Aorta (tissue), 5 donors: ENCODE measurements at regions of chr6 and their contacts with region 1.

Region 1: GRCh38 chr6:26473758-26474438 is 16.1 kb downstream of the BTN2A1 start:
- DNase-seq: peak; percentile 87 to 89
- ATAC-seq: peak; percentile 94
- H3K4me3 ChIP-seq: peak overlapping the region; percentile 28 to 87
- H3K27ac ChIP-seq: peak overlapping the region; percentile 75 to 87
- H3K4me1 ChIP-seq: no peaks in the 10 kb centered on the region
- H3K27me3 ChIP-seq: no peaks in the 10 kb centered on the region

Region 2: GRCh38 chr6:26401987-26402658 is 71.8 kb before region 1 on chr6 and contains the start of gene BTN3A1:
- intact Hi-C with region 1: loop called in 1 of 2 experiments (anchors 10 kb)
- DNase-seq: peak; percentile 73 to 90
- ATAC-seq: peak; percentile 94
- H3K4me3 ChIP-seq: peak within 1 kb of the TSS; percentile 70 to 88
- H3K27ac ChIP-seq: no peak within 1 kb of the TSS
- H3K4me1 ChIP-seq: peaks cover 0 to 3% of the 10 kb centered on the region in 2 donors
- H3K27me3 ChIP-seq: no peaks in the 10 kb centered on the region
- total RNA-seq, gene BTN3A1: 12.0 to 40.7 TPM

Region 3: DNA sequence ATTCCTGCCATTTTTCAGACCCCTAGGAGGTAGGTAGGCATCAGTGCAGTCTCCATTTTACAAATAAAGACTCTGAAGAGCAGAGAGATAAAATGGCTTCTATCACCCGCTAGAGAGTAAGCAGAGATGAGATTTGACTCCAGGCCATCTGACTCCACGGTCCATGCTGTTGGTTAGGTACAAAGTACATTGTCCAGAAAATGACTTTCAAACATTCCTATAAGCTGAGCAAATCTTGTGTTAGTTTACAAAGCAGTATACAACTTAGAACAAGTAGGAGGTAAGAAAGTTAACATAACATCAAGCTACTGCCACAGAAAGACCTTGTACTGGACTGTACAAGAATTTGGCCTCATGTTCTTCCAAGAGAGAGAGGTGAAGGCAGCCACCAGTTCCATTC is 41.1 kb after region 1 on chr6:
- intact Hi-C with region 1: loop called in 1 of 2 experiments (anchors 5 kb)
- DNase-seq: no peak
- ATAC-seq: no peak
- H3K4me3 ChIP-seq: no peak overlapping the region
- H3K27ac ChIP-seq: no peak overlapping the region
- H3K4me1 ChIP-seq: no peaks in the 10 kb centered on the region
- H3K27me3 ChIP-seq: no peaks in the 10 kb centered on the region